ENCODE measurements at regions of chr1 and their contacts with region 1.

Region 1: DNA sequence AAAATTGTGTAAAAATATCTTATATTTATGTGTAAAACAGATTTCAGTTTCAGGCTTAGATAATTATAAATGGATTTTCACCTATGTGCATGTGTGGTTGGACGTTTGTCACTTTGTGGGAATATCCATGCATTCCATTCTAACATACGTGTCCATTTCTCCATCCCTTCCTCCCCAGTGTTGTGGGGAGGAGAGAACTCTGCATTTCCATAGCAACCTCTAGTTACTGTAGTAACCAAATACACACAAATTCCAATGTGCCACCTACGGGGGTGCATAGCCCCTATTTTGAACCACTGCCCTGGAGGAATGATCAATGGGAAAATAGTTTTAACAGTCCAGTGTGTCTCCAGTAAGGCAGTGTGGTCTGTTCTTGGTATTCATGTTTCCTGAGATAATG is 79.0 kb downstream of the RASAL2 start:
- DNase-seq: no peak
- H3K4me3 ChIP-seq: no peak overlapping the region
- CTCF ChIP-seq: no peak
- POLR2A ChIP-seq: no peak

Region 2: GRCh38 chr1:178037503-178038253 is 135.3 kb before region 1 on chr1:
- intact Hi-C with region 1: loop called (anchors 5 kb)
- DNase-seq: peak; percentile 61 to 95
- H3K4me3 ChIP-seq: peak overlapping the region; percentile 70
- CTCF ChIP-seq: peak in 1 of 3 donors; percentile 4
- POLR2A ChIP-seq: no peak